Common myeloid progenitor, CD34-positive (primary cell): ENCODE measurements at regions of chr1 and their contacts with region 1.

Region 1: GRCh38 chr1:85307987-85308832 is 31.8 kb upstream of the BCL10 start:
- DNase-seq: peak; percentile 76 to 85 (median 82)
- H3K4me3 ChIP-seq: peak overlapping the region in 2 of 7 experiments; percentile 1 to 51
- H3K27ac ChIP-seq: no peak overlapping the region
- H3K4me1 ChIP-seq: peaks cover 0 to 2% (median 0%) of the 10 kb centered on the region in 4 experiments
- H3K27me3 ChIP-seq: peaks cover 0 to 11% (median 2%) of the 10 kb centered on the region in 5 experiments

Region 2: GRCh38 chr1:85297855-85298629 is 10.2 kb before region 1 on chr1:
- CTCF ChIA-PET with region 1: interaction called, 13 read pairs
- POLR2A ChIA-PET with region 1: no interaction called
- DNase-seq: no peak
- H3K4me3 ChIP-seq: no peak overlapping the region
- H3K27ac ChIP-seq: no peak overlapping the region
- H3K4me1 ChIP-seq: no peaks in the 10 kb centered on the region
- H3K27me3 ChIP-seq: no peaks in the 10 kb centered on the region

Region 3: DNA sequence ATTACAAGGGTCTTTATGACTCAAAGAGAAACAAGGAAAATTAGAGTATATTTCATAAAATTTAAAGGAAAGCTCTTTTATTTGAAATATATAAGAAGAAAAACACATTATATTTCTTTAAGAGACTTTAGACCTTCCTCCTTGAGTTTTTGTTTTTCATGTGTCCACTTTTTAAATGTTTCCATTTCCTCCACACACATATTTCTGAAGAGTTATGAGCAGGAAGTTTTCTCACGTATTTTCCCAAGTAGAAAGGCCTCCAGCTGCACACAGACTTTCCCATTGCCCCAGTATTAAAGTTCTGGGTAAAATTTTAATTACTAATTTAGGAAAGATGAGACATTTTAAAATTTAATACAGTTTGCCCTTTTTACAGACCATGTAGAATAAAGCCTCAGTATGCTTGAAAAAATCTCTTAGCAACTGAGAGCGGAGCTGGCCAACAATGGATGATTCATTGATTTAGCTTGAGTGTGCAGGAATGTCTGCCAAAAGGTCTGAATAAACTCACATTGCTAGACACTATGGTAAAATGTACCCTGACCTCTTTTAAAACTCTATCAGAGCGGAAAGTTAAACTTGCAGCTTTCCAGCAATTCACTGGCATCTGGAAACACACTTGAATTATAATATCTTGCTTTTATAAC is 98.8 kb after region 1 on chr1:
- CTCF ChIA-PET with region 1: interaction called, 12 read pairs
- POLR2A ChIA-PET with region 1: no interaction called
- DNase-seq: no peak
- H3K4me3 ChIP-seq: no peak overlapping the region
- H3K27ac ChIP-seq: no peak overlapping the region
- H3K4me1 ChIP-seq: no peaks in the 10 kb centered on the region
- H3K27me3 ChIP-seq: no peaks in the 10 kb centered on the region

Region 4: GRCh38 chr1:85502171-85502570 is 194.0 kb after region 1 on chr1:
- CTCF ChIA-PET with region 1: interaction called, 13 read pairs
- POLR2A ChIA-PET with region 1: no interaction called
- DNase-seq: no peak
- H3K4me3 ChIP-seq: no peak overlapping the region
- H3K27ac ChIP-seq: no peak overlapping the region
- H3K4me1 ChIP-seq: no peaks in the 10 kb centered on the region
- H3K27me3 ChIP-seq: no peaks in the 10 kb centered on the region

Region 5: DNA sequence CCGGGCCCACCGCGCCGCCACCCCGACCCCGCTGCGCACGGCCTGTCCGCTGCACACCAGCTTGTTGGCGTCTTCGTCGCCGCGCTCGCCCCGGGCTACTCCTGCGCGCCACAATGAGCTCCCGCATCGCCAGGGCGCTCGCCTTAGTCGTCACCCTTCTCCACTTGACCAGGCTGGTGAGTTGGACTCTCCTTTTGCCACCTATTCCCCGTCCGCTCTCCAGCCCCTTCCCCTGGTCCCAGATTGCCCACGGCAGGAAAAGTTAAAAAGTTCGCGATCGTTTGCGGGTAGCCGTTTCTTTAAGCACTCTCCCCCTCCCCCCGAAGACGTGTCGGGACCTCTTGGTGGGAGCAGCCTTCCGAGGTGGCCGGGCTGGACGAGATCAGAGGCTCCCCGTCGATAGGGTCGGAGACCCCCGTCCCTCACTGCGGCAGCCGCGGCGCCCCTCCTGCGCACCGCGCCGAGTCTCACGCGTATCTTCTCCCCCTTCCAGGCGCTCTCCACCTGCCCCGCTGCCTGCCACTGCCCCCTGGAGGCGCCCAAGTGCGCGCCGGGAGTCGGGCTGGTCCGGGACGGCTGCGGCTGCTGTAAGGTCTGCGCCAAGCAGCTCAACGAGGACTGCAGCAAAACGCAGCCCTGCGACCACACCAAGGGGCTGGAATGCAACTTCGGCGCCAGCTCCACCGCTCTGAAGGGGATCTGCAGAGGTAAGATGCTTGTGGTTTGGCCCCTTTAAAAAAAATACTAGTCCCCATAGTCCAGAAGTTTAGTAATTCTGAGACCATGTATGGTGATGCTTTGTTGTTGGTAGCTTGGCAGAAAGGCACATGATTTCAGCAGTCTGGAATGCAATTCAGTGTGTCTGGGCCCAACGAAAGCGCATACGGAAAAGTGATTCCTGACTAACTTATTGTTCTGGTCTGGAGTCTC is 272.9 kb after region 1 on chr1:
- CTCF ChIA-PET with region 1: interaction called, 16 read pairs
- POLR2A ChIA-PET with region 1: no interaction called
- DNase-seq: peak; percentile 76 to 89 (median 84)
- H3K4me3 ChIP-seq: peak overlapping the region; percentile 31 to 81 (median 69)
- H3K27ac ChIP-seq: peak overlapping the region in 1 of 2 experiments; percentile 1
- H3K4me1 ChIP-seq: peaks cover 0 to 37% (median 32%) of the 10 kb centered on the region in 4 experiments
- H3K27me3 ChIP-seq: peaks cover 9 to 67% (median 29%) of the 10 kb centered on the region in 5 experiments

Region 6: DNA sequence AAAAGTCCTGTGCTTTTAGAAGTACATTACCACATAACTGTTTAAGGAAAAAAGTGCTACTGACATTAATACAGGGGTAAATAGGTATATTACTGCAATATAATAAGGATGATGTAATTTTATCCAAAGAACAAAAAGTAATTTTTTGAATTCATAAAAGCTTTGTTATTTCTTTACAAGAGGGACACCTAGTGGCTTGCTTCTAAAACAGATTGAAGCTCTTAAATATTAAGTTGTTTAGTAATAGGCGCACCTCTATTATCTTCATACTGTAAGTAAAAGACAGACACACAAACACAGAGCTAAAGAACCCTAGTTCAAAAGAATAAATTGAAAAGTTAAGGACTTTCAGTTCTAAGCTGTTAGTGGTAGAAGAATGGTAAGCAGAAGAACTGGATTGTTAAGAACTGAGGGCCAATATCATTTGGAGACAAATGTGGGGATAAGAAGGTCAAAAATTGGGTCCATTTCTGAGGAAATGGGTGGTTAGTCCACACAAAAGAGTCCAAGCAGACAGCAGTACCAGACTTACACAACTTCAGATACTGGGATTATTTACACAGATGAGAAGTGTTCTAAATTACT is 384.6 kb after region 1 on chr1:
- CTCF ChIA-PET with region 1: interaction called, 33 read pairs
- POLR2A ChIA-PET with region 1: no interaction called
- DNase-seq: peak; percentile 25 to 58 (median 55)
- H3K4me3 ChIP-seq: no peak overlapping the region
- H3K27ac ChIP-seq: no peak overlapping the region
- H3K4me1 ChIP-seq: no peaks in the 10 kb centered on the region
- H3K27me3 ChIP-seq: no peaks in the 10 kb centered on the region